ENCODE measurements at regions of chr12 and their contacts with region 1.

Region 1: GRCh38 chr12:110449799-110450497 is at the start of gene ARPC3:
- DNase-seq: peak; percentile 94
- H3K4me3 Mint-ChIP-seq: peak within 1 kb of the TSS; percentile 100
- H3K27ac Mint-ChIP-seq: peak within 1 kb of the TSS; percentile 100
- H3K4me1 Mint-ChIP-seq: peaks cover 42% of the 10 kb centered on the region
- H3K27me3 Mint-ChIP-seq: no peaks in the 10 kb centered on the region
- total RNA-seq, gene ARPC3: 279 and 290 TPM in 2 replicates

Region 2: DNA sequence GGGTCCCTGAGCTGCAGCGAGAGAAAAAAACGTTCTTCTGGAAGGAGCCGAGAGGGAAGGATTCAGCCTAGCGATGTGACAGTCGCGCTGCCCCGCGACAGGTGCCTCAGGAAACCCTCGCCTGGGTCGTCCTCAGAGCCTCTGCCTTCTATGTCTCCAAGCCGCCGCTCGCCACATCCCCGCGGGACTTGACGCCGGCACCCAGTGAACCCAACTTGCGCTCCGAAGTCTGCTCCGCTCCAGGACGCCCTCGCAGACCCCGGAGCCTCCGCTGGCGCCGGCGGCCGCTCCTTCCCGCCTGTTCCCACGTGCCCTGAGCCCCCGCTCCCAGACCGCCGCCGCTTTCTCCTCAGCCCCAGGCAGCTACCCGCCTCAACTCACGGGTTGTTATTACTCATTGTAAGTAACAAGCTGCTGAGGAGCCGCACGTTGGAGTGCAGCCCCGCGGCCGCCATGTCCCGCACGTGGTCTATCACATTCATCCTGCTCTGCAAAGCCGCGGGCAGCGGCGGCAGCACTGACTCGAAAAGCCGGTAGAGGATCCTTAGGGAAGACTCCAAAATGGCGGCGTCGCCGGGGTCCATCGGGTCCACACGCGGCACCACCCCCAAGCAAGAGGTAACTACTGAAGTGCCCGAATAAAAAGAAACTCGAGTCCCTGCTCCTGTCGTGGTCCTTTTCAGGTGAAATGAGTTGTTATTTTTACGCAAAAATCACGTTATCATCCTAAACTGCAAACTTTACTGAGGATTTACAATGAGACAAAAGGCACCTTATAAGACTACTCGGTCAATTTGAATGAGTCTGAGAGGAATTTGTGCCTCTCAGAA is 46.6 kb before region 1 on chr12 and contains the start of gene ANAPC7:
- intact Hi-C with region 1: loop called (anchors 1 kb)
- DNase-seq: peak; percentile 81
- H3K4me3 Mint-ChIP-seq: peak within 1 kb of the TSS; percentile 100
- H3K27ac Mint-ChIP-seq: peak within 1 kb of the TSS; percentile 97
- H3K4me1 Mint-ChIP-seq: peaks cover 25% of the 10 kb centered on the region
- H3K27me3 Mint-ChIP-seq: no peaks in the 10 kb centered on the region
- total RNA-seq, gene ANAPC7: 72.0 and 72.6 TPM in 2 replicates

Region 3: DNA sequence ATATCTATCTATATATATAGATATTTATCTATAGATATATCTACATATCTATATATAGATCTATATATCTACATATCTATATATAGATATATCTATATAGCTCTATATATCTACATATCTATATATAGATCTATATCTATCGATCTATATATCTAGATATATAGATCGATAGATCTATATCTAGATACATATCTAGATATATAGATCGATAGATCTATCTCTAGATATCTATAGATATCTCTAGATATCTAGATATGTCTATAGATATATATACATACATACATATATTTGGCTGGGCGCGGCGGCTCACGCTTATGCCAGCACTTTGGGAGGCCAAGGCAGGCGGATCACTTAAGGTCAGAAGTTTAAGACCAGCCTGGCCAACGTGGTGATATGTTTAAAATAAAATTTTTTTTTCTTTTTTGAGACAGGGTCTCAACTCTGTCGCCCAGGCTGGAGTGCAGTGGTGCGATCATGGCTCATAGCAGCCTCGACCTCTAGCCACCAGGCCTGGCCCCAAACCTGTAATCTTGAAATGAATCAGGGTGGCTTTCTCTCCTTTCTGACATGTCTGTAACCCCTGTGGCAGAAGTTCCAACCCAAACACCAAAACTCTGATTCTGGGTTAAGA is 17.9 kb before region 1 on chr12:
- intact Hi-C with region 1: loop called (anchors 1 kb)
- DNase-seq: no peak
- H3K4me3 Mint-ChIP-seq: no peak overlapping the region
- H3K27ac Mint-ChIP-seq: no peak overlapping the region
- H3K4me1 Mint-ChIP-seq: no peaks in the 10 kb centered on the region
- H3K27me3 Mint-ChIP-seq: peaks cover 4% of the 10 kb centered on the region

Region 4: GRCh38 chr12:110501752-110502738 is 52.1 kb after region 1 on chr12 and contains the starts of genes RAD9B and VPS29:
- intact Hi-C with region 1: loop called (anchors 1 kb)
- DNase-seq: peak; percentile 99
- H3K4me3 Mint-ChIP-seq: peak within 1 kb of the TSS; percentile 90
- H3K27ac Mint-ChIP-seq: peak within 1 kb of the TSS; percentile 90
- H3K4me1 Mint-ChIP-seq: peaks cover 29% of the 10 kb centered on the region
- H3K27me3 Mint-ChIP-seq: no peaks in the 10 kb centered on the region
- total RNA-seq, gene RAD9B: 0.88 and 1.4 TPM in 2 replicates
- total RNA-seq, gene VPS29: 109 and 111 TPM in 2 replicates

Region 5: DNA sequence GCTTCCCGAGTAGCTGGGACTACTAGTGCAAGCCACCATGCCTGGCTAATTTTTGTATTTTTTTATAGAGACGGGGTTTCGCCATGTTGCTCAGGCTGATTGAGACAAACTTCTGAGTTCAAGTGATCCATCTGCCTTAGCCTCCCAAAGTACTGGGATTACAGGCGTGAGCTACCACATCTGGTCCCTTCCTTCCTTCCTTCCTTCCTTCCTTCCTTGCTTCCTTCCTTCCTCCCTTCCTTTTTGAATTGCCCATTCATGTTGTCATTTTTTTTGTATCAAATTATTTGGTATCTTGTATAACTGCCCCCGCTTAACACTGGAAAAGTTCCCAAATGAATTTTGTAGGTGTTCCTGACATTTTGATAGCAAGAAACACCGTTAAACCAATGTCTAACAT is 63.9 kb after region 1 on chr12:
- intact Hi-C with region 1: loop called (anchors 2 kb)
- DNase-seq: no peak
- H3K4me3 Mint-ChIP-seq: no peak overlapping the region
- H3K27ac Mint-ChIP-seq: no peak overlapping the region
- H3K4me1 Mint-ChIP-seq: no peaks in the 10 kb centered on the region
- H3K27me3 Mint-ChIP-seq: peaks cover 19% of the 10 kb centered on the region

Region 6: DNA sequence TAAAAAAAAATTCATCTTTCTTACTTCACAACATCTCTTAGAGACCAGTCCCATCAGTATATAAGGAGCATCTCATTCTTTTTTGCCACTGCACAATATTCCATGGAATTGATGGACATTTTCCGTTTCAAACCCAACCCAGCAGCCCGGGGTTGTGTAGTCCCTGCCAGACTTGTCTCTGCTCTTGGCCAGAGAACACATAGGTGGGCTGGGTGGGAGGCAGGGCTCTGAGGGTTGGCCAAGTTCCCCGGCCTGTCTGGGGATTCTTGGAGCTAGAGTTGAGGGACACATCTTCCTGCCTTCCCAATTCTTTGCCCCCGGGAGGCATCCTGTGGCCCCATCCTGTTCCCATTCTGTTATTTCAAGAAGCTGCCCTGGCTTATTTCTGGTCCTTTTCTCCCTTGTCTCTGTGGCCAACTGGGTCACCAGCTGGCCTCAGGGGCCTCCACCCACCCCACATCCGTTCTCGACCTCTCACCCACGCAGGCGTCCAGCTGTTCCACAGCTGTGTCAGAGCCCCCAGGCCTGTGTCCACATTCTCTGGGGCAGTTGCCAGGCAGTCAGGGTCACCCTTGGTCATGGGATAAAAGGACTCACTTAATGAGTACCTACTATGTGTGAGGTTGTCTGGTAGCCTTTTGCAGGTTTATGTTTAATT is 344.8 kb after region 1 on chr12:
- intact Hi-C with region 1: no loop called
- DNase-seq: no peak
- H3K4me3 Mint-ChIP-seq: no peak overlapping the region
- H3K27ac Mint-ChIP-seq: no peak overlapping the region
- H3K4me1 Mint-ChIP-seq: peaks cover 27% of the 10 kb centered on the region
- H3K27me3 Mint-ChIP-seq: no peaks in the 10 kb centered on the region

Region 7: GRCh38 chr12:110888256-110888991 is 438.5 kb after region 1 on chr12:
- intact Hi-C with region 1: loop called (anchors 1 kb)
- DNase-seq: no peak
- H3K4me3 Mint-ChIP-seq: no peak overlapping the region
- H3K27ac Mint-ChIP-seq: no peak overlapping the region
- H3K4me1 Mint-ChIP-seq: peaks cover 5% of the 10 kb centered on the region
- H3K27me3 Mint-ChIP-seq: peaks cover 6% of the 10 kb centered on the region